ENCODE measurements at regions of chr11 and their contacts with region 1.

Region 1: DNA sequence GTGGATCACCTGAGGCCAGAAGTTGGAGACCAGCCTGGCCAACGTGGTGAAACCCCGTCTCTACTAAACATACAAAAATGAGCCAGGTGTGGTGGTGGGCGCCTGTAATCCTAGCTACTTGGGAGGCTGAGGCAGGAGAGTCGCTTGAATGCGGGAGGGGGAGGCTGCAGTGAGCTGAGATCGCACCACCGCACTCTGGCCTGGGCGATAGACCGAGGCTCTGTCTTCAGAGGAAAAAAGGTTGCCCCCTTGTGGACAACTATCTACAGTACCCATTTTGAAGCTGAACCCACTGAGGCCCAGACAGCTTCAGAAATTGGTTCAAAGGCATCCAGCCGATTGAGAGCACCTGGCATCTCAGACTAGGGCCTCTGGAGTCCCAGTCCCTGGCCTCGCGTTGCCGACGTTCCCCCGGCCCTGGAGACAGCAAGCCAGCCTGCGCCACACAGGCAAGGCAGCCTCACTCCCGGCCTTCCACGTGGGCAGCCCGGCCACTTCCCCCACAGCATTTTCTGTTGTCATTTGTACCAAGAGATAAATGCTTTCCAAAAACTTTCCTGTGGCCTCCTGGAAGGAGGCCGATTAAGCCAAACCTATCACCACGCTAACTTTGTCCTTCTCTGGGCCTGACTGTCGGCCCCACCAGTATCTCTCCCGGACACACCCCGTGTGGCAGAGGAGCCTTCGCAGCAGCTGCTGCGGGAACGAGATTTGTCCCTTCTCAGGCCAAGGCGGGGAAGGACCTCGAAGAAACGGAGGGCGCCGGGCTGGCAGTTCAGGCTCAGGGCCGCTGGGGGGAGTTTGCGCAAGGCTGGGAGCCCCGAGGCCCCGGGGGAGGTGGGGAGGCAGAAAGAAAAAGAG is 82.8 kb downstream of the FLI1 start:
- DNase-seq: peak; percentile 79
- ATAC-seq: peak; percentile 66 to 76

Region 2: GRCh38 chr11:128810784-128811514 is 34.3 kb after region 1 on chr11:
- intact Hi-C with region 1: no loop called
- DNase-seq: no peak
- ATAC-seq: no peak

Region 3: GRCh38 chr11:128824191-128825049 is 47.8 kb after region 1 on chr11:
- intact Hi-C with region 1: loop called in 1 of 2 experiments (anchors 5 kb)
- DNase-seq: no peak
- ATAC-seq: peak; percentile 48 to 71

Region 4: DNA sequence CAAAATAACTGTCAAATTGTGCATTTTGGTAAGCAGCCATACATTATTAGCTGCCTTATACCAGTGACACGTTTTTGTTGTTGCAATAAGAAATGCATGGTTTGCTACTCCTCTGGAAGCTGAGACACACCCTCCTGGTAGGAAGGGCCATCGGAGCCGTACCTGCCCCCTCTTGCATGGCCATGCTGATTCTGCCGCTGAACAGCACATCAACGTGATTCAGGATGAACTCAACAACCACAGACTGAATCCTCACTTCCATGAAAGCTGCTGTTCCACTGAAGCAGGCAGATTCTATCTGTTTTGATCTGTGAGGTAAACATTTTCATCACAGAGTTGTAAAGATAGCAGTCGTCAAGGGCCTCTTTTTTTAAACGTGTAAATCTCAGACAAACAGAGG is 204.6 kb after region 1 on chr11:
- intact Hi-C with region 1: no loop called
- DNase-seq: no peak
- ATAC-seq: no peak